ENCODE measurements at regions of chr2 and their contacts with region 1.

Region 1: DNA sequence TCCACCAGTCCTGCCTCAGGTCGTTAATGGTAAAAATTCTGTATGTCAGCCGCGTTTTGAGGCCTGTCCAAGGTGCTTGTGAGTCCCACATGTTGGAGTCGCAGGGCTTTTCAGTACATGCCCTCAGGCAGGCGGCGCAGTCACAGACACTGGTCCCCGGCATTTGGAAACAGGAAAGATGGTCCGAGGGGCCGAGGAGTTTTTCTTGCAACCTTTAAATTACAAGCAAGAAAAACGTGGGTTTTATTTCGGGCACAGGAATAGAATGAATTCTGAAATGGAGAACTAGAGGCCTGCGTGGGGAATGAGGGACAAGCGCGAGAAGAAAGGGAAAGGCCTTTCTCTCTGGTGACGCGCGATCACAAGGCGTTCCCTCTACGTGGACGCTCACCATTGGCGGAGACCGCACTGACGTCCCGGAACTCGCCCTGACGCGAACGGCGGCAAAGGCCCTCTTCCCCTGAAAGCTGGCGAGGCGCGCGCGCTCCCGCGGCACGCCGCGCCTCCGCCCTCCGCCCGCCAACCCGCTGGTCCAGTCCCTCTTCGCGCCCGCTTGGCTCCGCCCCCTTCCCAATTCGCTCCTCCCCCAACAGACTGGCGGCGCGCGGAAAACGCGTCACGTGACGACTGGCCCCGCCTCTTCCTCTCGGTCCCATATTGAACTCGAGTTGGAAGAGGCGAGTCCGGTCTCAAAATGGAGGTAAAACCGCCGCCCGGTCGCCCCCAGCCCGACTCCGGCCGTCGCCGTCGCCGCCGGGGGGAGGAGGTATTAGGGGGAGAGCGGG is at the start of gene HNRNPA3:
- DNase-seq: peak; percentile 99 to 100 (median 100)
- H3K4me3 ChIP-seq: peak within 1 kb of the TSS; percentile 98 to 99
- H3K4me3 Mint-ChIP-seq: peak within 1 kb of the TSS; percentile 86 to 98 (median 95)
- H3K27ac ChIP-seq: peak within 1 kb of the TSS; percentile 100
- H3K27ac Mint-ChIP-seq: peak within 1 kb of the TSS; percentile 98 to 100 (median 99)
- H3K4me1 ChIP-seq: peaks cover 55% of the 10 kb centered on the region
- H3K4me1 Mint-ChIP-seq: peaks cover 26 to 66% (median 38%) of the 10 kb centered on the region in 4 donors
- H3K27me3 ChIP-seq: no peaks in the 10 kb centered on the region
- H3K27me3 Mint-ChIP-seq: no peaks in the 10 kb centered on the region
- total RNA-seq, gene HNRNPA3: 172 to 175 TPM

Region 2: GRCh38 chr2:177201919-177202346 is 10.4 kb before region 1 on chr2:
- CTCF ChIA-PET with region 1: interaction called, 6 read pairs
- POLR2A ChIA-PET with region 1: interaction called, 13 read pairs
- intact Hi-C with region 1: no loop called
- DNase-seq: no peak
- H3K4me3 ChIP-seq: no peak overlapping the region
- H3K4me3 Mint-ChIP-seq: peak overlapping the region in 1 of 8 donors; percentile 36
- H3K27ac ChIP-seq: no peak overlapping the region
- H3K27ac Mint-ChIP-seq: peak overlapping the region in 1 of 7 donors; percentile 81
- H3K4me1 ChIP-seq: no peaks in the 10 kb centered on the region
- H3K4me1 Mint-ChIP-seq: peaks cover 0 to 4% (median 3%) of the 10 kb centered on the region in 4 donors
- H3K27me3 ChIP-seq: no peaks in the 10 kb centered on the region
- H3K27me3 Mint-ChIP-seq: no peaks in the 10 kb centered on the region

Region 3: GRCh38 chr2:177229448-177230242 is 17.3 kb after region 1 on chr2:
- CTCF ChIA-PET with region 1: interaction called, 6 read pairs
- POLR2A ChIA-PET with region 1: interaction called, 31 read pairs
- intact Hi-C with region 1: loop called (anchors 2 kb)
- DNase-seq: no peak
- H3K4me3 ChIP-seq: no peak overlapping the region
- H3K4me3 Mint-ChIP-seq: peak overlapping the region in 1 of 8 donors; percentile 15
- H3K27ac ChIP-seq: no peak overlapping the region
- H3K27ac Mint-ChIP-seq: peak overlapping the region in 6 of 7 donors; percentile 7 to 88 (median 66)
- H3K4me1 ChIP-seq: no peaks in the 10 kb centered on the region
- H3K4me1 Mint-ChIP-seq: peaks cover 25 to 60% (median 39%) of the 10 kb centered on the region in 4 donors
- H3K27me3 ChIP-seq: no peaks in the 10 kb centered on the region
- H3K27me3 Mint-ChIP-seq: no peaks in the 10 kb centered on the region

Region 4: DNA sequence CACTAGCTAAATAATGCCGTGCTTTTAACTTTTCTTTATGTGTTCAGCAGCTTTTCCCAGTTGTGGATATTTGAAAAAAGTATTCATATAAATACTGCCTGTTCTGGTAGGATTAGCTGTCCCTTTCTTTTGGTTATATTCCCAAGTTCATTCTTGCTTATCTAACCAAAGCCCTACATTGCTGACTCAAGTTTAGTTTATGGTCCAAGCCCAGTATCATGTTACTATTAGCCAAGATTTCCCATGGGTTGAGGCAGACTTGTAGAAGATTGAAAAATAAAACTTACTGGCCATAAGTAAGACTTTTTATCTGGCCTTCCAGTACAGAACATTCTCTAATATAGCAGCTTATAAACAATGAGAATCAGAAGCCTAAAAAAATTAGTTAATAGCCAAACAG is 101.9 kb after region 1 on chr2:
- CTCF ChIA-PET with region 1: interaction called, 3 read pairs
- POLR2A ChIA-PET with region 1: interaction called, 13 read pairs
- intact Hi-C with region 1: no loop called
- DNase-seq: no peak
- H3K4me3 ChIP-seq: no peak overlapping the region
- H3K4me3 Mint-ChIP-seq: no peak overlapping the region
- H3K27ac ChIP-seq: no peak overlapping the region
- H3K27ac Mint-ChIP-seq: no peak overlapping the region
- H3K4me1 ChIP-seq: peaks cover 17% of the 10 kb centered on the region
- H3K4me1 Mint-ChIP-seq: peaks cover 10 to 24% (median 15%) of the 10 kb centered on the region in 4 donors
- H3K27me3 ChIP-seq: no peaks in the 10 kb centered on the region
- H3K27me3 Mint-ChIP-seq: no peaks in the 10 kb centered on the region

Region 5: GRCh38 chr2:177552422-177553175 is 340.3 kb after region 1 on chr2:
- CTCF ChIA-PET with region 1: no interaction called
- POLR2A ChIA-PET with region 1: no interaction called
- intact Hi-C with region 1: loop called (anchors 1 kb)
- DNase-seq: peak; percentile 94 to 96 (median 96)
- H3K4me3 ChIP-seq: peak overlapping the region; percentile 57 to 90
- H3K4me3 Mint-ChIP-seq: peak overlapping the region; percentile 95 to 99 (median 98)
- H3K27ac ChIP-seq: peak overlapping the region; percentile 97
- H3K27ac Mint-ChIP-seq: peak overlapping the region; percentile 98 to 100 (median 100)
- H3K4me1 ChIP-seq: peaks cover 9% of the 10 kb centered on the region
- H3K4me1 Mint-ChIP-seq: peaks cover 6 to 20% (median 8%) of the 10 kb centered on the region in 4 donors
- H3K27me3 ChIP-seq: no peaks in the 10 kb centered on the region
- H3K27me3 Mint-ChIP-seq: peaks cover 3 to 4% of the 10 kb centered on the region in 2 donors

Region 6: DNA sequence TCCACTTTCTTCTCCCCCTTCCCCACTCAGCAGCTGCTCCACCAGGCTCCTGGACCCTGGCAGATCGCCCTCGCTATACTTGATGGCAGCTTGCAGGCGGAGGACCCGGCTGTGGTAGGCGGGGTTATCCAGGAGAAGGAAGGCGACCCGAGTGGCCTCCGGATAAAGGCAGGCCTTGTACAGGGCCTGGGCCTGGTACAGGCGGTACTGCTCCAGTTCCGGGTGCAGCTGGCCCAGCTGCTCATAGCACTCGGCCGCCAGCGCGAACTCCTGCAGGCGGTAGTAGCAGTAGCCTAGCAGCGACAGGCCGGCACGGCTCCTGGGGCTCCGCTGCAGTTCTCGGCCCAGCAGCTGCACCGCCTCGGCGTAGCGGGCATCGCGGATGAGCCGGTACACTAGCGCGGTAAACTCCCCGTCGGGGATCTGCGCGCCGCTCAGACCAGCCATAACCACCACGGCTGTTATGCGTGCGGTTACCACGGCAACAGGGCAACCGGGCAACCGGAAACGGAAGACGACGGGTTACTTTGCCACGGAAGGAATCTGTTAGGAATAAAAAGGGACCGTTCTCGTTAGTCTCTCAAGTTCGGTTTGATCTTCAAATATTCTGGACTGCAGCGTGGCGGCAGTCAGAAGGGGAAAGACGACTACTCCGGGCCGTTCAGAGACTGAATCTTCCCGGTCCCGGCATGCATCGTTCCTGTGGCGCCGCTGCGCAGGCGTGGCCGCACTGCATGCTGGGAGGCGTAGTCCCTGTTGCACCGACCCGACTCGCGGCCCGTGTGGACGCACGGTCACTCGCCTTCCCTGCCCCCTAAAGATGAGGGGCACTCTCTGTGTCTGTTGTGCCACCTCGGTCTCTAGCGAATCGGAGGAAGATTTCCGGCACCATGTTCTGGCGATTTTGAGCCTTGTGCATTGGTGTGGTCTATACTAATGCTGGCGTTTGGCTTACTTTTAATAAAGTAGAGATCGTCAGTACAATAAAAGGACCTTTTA is 406.3 kb after region 1 on chr2:
- CTCF ChIA-PET with region 1: no interaction called
- POLR2A ChIA-PET with region 1: no interaction called
- intact Hi-C with region 1: loop called (anchors 2 kb)
- DNase-seq: peak; percentile 92 to 94 (median 93)
- H3K4me3 ChIP-seq: peak overlapping the region; percentile 85 to 87
- H3K4me3 Mint-ChIP-seq: peak overlapping the region; percentile 92 to 98 (median 97)
- H3K27ac ChIP-seq: peak overlapping the region; percentile 97
- H3K27ac Mint-ChIP-seq: peak overlapping the region; percentile 98 to 100 (median 100)
- H3K4me1 ChIP-seq: peaks cover 5% of the 10 kb centered on the region
- H3K4me1 Mint-ChIP-seq: peaks cover 3 to 19% (median 8%) of the 10 kb centered on the region in 4 donors
- H3K27me3 ChIP-seq: no peaks in the 10 kb centered on the region
- H3K27me3 Mint-ChIP-seq: peaks cover 4 to 9% of the 10 kb centered on the region in 2 donors

Region 7: DNA sequence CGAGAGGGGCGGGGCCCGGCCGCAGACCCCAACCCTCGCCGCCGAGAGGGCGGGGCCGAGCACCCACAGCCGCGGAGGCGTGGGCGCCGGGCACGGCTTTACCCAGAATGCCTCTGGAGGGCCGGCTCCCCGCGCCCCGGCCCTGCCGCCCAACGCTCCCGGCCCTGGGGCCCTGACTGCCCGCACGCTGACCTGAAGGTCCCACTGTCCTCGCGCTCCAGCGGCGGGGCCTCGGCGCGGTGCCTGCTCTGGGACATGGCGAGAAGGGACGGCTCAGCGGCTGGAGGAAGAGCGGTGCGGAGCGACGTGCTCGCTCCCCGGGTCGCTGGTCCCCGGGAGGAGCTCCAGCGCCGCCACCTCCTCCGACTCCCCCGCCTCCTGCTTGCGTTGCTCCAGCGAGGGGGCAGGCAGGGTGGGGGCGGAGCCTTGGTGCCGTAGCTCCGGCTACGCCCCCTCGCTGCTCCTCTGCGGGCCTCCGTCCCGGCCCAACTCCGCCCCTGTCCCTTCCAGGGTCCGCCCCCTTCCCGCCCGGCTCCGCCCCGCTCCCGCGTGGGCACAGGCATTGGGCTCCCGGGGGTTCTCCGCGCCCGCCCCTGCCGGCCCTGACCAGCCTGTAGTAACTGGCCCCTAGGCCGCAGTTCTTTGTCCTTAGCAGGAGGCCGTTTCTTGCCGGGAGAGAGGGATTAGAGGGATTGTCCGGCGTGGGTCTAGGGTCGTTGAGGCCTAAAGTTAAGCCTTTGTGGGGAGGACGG is 1238.7 kb after region 1 on chr2 and contains the starts of genes PJVK and PRKRA:
- CTCF ChIA-PET with region 1: no interaction called
- POLR2A ChIA-PET with region 1: no interaction called
- intact Hi-C with region 1: loop called (anchors 2 kb)
- DNase-seq: peak; percentile 93 to 95 (median 94)
- H3K4me3 ChIP-seq: peak within 1 kb of the TSS; percentile 40 to 76
- H3K4me3 Mint-ChIP-seq: peak within 1 kb of the TSS; percentile 87 to 93 (median 90)
- H3K27ac ChIP-seq: peak within 1 kb of the TSS; percentile 97
- H3K27ac Mint-ChIP-seq: peak within 1 kb of the TSS; percentile 94 to 97 (median 97)
- H3K4me1 ChIP-seq: peaks cover 32% of the 10 kb centered on the region
- H3K4me1 Mint-ChIP-seq: peaks cover 21 to 34% (median 27%) of the 10 kb centered on the region in 4 donors
- H3K27me3 ChIP-seq: no peaks in the 10 kb centered on the region
- H3K27me3 Mint-ChIP-seq: peaks cover 2 to 3% of the 10 kb centered on the region in 2 donors
- total RNA-seq, gene PJVK: 3.6 to 4.1 TPM
- total RNA-seq, gene PRKRA: 51.0 to 52.4 TPM

Measured in CD4-positive, alpha-beta memory T cell (primary cell).